Caco-2 (cell line): ENCODE measurements at regions of chr13 and their contacts with region 1.

Region 1: DNA sequence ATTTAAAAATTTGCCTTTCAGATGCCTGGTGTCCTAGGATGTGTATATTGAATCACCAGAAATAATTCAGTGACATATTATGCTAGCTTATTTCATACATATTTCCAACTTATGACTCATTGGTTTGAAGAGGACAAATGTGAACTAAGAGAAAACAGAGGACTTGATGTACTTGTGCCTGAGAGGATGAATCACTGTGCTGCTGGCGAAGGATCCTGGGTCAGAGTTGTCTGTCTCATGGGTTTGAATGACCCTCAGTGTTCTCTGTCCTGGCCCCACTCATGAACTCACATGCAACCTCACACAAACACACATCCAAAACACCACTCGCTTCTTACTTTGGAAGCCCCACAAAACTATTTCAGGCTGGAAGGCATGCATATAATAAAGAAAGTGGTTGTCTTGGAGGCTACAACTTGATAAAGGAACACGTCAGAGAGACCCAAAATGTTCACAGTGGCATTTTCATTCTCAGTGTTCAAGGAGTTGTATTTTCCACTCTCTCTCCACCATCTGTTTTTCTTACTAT is 129.0 kb upstream of the SPRY2 start:
- DNase-seq: no peak
- H3K4me3 ChIP-seq: no peak overlapping the region
- H3K4me3 Mint-ChIP-seq: no peak overlapping the region
- H3K27ac Mint-ChIP-seq: no peak overlapping the region
- H3K4me1 ChIP-seq: no peaks in the 10 kb centered on the region; the same call in 1 of the 2 replicates
- H3K4me1 Mint-ChIP-seq: no peaks in the 10 kb centered on the region
- H3K27me3 ChIP-seq: no peaks in the 10 kb centered on the region
- H3K27me3 Mint-ChIP-seq: no peaks in the 10 kb centered on the region
- CTCF ChIP-seq: no peak

Region 2: GRCh38 chr13:80408270-80408669 is 61.6 kb before region 1 on chr13:
- CTCF ChIA-PET with region 1: no interaction called
- POLR2A ChIA-PET with region 1: no interaction called
- intact Hi-C with region 1: no loop called
- DNase-seq: peak; percentile 18 to 44
- H3K4me3 ChIP-seq: no peak overlapping the region
- H3K4me3 Mint-ChIP-seq: no peak overlapping the region
- H3K27ac Mint-ChIP-seq: no peak overlapping the region
- H3K4me1 ChIP-seq: no peaks in the 10 kb centered on the region
- H3K4me1 Mint-ChIP-seq: no peaks in the 10 kb centered on the region
- H3K27me3 ChIP-seq: no peaks in the 10 kb centered on the region
- H3K27me3 Mint-ChIP-seq: no peaks in the 10 kb centered on the region
- CTCF ChIP-seq: peak; percentile 18 to 33

Region 3: GRCh38 chr13:80454245-80454644 is 15.7 kb before region 1 on chr13:
- CTCF ChIA-PET with region 1: no interaction called
- POLR2A ChIA-PET with region 1: interaction called, 21 read pairs
- intact Hi-C with region 1: no loop called
- DNase-seq: no peak
- H3K4me3 ChIP-seq: no peak overlapping the region
- H3K4me3 Mint-ChIP-seq: no peak overlapping the region
- H3K27ac Mint-ChIP-seq: no peak overlapping the region
- H3K4me1 ChIP-seq: no peaks in the 10 kb centered on the region
- H3K4me1 Mint-ChIP-seq: no peaks in the 10 kb centered on the region
- H3K27me3 ChIP-seq: no peaks in the 10 kb centered on the region
- H3K27me3 Mint-ChIP-seq: peaks cover 11% of the 10 kb centered on the region
- CTCF ChIP-seq: no peak

Region 4: DNA sequence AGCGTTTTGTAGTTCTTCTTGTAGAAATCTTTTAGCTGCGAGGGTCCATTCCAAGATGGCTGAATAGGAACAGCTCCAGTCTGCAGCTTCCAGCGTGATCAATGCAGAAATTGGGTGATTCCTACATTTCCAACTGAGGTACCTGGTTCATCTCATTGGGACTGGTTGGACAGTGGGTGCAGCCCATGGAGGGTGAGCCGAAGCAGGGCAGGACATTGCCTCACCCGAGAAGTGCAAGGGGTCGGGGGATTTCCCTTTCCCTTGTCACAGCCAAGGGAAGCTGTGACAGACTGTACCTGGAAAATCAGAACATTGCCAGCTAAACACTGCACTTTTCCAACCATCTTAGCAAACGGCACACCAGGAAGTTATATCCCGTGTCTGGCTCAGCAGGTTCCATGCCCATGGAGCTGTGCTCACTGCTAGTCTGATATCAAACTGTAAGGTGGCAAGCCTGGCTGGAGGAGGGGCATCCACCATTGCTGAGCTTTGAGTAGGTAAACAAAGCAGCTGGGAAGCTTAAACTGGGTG is 47.0 kb after region 1 on chr13:
- CTCF ChIA-PET with region 1: no interaction called
- POLR2A ChIA-PET with region 1: no interaction called
- intact Hi-C with region 1: no loop called
- DNase-seq: no peak
- H3K4me3 ChIP-seq: no peak overlapping the region
- H3K4me3 Mint-ChIP-seq: no peak overlapping the region
- H3K27ac Mint-ChIP-seq: no peak overlapping the region
- H3K4me1 ChIP-seq: no peaks in the 10 kb centered on the region
- H3K4me1 Mint-ChIP-seq: no peaks in the 10 kb centered on the region
- H3K27me3 ChIP-seq: no peaks in the 10 kb centered on the region
- H3K27me3 Mint-ChIP-seq: peaks cover 14% of the 10 kb centered on the region
- CTCF ChIP-seq: no peak